ENCODE measurements at regions of chr20 and their contacts with region 1.

Region 1: DNA sequence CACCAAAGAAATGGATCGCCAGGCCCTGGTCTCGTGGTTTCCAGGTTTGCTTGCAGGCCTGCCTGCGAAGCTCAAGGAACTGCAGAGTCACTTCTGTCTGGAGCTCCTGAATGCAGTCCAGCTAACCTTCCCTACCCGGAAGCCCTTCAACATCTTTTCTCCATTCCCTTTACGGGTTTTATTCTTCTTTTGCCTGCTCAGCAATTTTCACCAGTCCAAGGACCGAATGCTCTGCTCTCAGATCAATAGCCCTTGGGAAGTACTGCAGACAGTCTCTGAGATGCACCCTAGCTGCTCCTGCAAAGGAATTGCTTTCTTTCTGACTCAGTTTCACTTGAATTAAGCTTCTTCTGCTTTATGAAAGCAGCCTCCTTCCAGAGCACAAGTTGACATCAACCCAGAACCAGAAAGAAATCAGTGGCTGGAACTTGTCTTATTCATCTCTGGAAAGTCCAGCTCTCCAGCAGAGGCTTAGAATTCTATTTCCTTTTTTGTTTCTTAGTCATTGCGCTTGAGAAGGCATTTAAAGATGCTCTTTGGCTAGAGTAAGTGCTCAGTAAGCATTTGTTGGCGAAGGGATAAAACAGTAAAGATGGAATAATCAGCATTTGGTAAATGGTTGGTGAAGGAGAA is 18.7 kb upstream of the YWHAB start:
- DNase-seq: no peak
- H3K4me3 ChIP-seq: no peak overlapping the region
- H3K27ac ChIP-seq: no peak overlapping the region
- H3K4me1 ChIP-seq: peaks cover 4% of the 10 kb centered on the region
- H3K27me3 ChIP-seq: no peaks in the 10 kb centered on the region
- CTCF ChIP-seq: no peak
- EP300 ChIP-seq: no peak
- POLR2A ChIP-seq: no peak

Region 2: GRCh38 chr20:43666376-43667328 is 1200.2 kb before region 1 on chr20 and contains the start of gene MYBL2:
- intact Hi-C with region 1: no loop called
- DNase-seq: peak in 4 of 5 donors; percentile 20 to 59 (median 40)
- H3K4me3 ChIP-seq: peak within 1 kb of the TSS; percentile 2
- H3K27ac ChIP-seq: no peak within 1 kb of the TSS
- H3K4me1 ChIP-seq: peaks cover 5% of the 10 kb centered on the region
- H3K27me3 ChIP-seq: no peaks in the 10 kb centered on the region
- CTCF ChIP-seq: no peak
- EP300 ChIP-seq: no peak
- POLR2A ChIP-seq: no peak
- total RNA-seq, gene MYBL2: 0.11 to 1.6 (median 0.67) TPM in 4 of 7 donors, not detected in the others

Region 3: DNA sequence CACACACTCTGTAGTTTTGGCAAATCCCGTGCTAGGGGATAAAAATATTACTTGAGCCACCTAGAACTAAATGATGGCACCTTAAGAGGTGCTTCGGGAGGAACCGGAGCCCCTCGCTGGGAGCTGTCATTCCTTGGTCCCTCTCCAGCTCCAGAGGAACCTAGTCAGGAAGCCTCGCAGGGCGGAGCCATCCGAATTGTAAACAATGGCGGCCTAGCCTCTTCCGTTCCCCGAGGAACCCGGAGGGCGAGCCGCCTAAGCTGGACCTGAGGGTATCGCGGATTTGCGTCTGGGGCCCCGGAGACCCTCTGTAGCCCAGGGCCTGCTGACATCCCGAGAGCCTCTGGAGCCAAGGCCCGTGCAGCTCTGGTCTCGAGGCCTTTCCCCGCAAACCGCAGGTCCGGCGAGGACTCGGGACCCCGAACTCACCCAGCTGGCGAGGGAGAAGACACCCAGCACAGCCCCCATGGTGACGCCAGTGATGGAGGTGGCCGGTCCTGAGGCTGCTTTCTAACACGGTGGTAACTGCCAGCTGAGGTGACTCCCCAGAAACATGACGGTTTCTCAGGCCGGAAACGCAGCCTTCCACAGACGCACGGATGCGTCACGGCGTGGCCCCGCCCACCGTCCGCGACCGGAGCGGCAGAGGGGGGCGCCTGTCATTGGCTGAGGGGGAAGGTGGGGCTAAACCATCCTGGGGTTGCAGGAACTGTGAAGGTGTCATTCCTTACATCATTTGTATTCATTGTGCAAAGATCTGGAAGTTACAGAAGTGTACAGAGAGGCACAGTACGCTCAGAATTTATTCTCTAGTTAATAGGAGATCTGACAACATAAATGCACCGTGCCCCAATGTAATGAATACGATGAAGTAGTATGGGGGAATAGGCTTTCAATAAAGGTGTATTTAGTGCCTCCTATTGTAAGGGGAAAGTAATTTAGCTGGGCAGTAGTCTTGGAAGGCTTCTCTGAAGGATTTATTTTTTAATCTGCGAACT is 345.0 kb before region 1 on chr20 and contains the start of gene SERINC3:
- intact Hi-C with region 1: no loop called
- DNase-seq: peak; percentile 94 to 98 (median 96)
- H3K4me3 ChIP-seq: peak within 1 kb of the TSS; percentile 99
- H3K27ac ChIP-seq: peak within 1 kb of the TSS; percentile 95 to 97
- H3K4me1 ChIP-seq: peaks cover 13% of the 10 kb centered on the region
- H3K27me3 ChIP-seq: no peaks in the 10 kb centered on the region
- CTCF ChIP-seq: peak in 1 of 3 donors; percentile 18
- EP300 ChIP-seq: peak; percentile 62
- POLR2A ChIP-seq: peak; percentile 94
- total RNA-seq, gene SERINC3: 52.1 to 113 (median 90.1) TPM

Region 4: GRCh38 chr20:44785769-44786168 is 81.0 kb before region 1 on chr20:
- intact Hi-C with region 1: loop called in 1 of 4 experiments (anchors 5 kb)
- DNase-seq: no peak
- H3K4me3 ChIP-seq: no peak overlapping the region
- H3K27ac ChIP-seq: no peak overlapping the region
- H3K4me1 ChIP-seq: no peaks in the 10 kb centered on the region
- H3K27me3 ChIP-seq: no peaks in the 10 kb centered on the region
- CTCF ChIP-seq: no peak
- EP300 ChIP-seq: no peak
- POLR2A ChIP-seq: no peak